Right ventricle myocardium superior (tissue), 1 donor: ENCODE measurements at regions of chr17 and their contacts with region 1.

Region 1: GRCh38 chr17:44919885-44920564 is 4.7 kb upstream of the GFAP start:
- DNase-seq: peak; percentile 88
- ATAC-seq: peak; percentile 82

Region 2: DNA sequence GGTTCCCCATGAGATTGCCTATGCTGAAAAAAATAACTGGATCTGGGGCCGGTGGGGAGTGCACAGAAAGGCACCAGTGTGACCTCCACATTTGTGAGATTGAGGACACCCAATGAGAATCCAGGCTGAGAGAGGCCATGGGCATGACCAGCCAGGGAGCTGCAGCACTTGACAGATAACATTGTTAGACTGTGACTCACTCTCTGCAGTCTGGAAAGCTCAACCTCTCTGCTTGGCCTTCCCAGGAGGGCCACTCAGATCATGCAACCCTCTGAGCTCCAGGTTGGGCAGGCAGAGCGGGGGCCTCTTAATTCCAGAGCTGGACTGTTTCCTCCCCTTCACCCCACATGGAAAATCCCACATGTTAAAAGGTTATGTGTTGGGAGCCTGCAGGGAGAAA is 332.7 kb before region 1 on chr17:
- intact Hi-C with region 1: no loop called
- DNase-seq: peak; percentile 48
- ATAC-seq: peak; percentile 97

Region 3: DNA sequence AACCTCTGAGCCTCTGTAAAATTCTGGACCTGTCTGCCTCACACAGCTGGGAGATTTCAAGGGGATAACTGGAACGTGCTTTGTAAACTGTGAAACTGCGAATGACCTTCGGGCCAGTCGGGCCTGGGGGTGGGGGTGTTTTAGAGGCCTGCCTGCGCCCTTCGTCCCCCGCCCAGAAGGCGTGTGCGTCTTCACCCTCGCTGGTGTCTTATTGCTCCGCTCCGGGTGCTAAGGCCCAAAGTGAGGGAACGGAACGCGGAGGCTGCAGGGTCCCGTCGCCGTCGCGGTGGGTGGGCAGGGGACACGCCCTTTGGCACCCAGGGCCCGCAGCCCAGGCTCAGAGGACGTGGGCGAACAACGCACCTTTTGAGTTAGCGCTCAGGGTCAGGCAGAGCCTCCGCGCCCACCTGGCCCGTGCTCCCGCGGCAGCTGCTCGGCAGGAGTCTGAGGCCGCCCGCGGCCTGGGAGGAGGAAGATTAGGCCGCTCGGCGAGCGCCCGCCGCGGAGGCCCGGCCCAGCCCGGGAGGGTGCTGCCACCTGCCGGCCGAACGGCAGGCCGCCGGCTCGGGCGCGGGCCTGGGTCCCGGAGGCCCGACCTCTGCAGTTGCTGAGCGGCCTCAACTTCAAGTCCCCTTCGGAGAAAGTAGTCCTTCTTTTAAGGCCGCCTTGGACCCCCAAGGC is 101.7 kb after region 1 on chr17:
- intact Hi-C with region 1: loop called (anchors 2 kb)
- DNase-seq: peak; percentile 84
- ATAC-seq: peak; percentile 83

Region 4: DNA sequence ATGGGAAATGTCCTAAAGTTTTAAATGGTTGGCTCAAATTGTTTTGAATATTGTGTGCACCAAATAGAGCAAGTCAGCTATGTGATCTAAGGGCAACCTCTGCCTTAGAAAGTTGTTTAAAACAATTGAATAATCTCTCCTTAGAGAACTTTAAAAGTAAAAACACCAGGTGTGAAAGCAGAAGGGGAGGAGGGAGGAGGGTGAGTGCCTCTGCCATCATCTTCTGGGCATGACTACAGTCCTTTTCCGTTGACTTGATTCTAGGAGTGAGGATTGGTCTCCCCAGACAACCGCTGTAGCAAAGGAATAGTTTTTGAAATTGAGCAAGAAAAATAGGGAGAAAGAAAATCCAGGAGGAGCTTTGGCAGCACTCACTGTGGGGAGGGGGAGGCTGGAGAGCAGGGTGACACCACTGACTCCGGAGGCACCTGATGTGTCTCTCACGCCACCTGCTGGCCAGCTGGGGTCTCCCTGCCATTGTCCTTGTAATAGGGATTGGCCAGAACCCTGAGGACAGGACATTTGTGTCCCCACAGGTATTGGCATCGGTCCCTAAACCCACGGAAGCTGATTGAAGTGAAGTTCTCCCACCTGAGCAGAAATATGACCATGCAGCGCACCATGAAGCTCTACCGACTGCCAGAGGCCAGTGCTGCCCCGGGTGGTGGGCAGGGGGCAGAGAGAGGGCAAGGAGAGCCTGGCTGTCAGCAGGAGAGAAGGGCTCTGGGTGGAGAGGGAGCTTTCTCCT is 179.0 kb after region 1 on chr17:
- intact Hi-C with region 1: loop called (anchors 10 kb)
- DNase-seq: peak; percentile 92
- ATAC-seq: peak; percentile 78

Region 5: DNA sequence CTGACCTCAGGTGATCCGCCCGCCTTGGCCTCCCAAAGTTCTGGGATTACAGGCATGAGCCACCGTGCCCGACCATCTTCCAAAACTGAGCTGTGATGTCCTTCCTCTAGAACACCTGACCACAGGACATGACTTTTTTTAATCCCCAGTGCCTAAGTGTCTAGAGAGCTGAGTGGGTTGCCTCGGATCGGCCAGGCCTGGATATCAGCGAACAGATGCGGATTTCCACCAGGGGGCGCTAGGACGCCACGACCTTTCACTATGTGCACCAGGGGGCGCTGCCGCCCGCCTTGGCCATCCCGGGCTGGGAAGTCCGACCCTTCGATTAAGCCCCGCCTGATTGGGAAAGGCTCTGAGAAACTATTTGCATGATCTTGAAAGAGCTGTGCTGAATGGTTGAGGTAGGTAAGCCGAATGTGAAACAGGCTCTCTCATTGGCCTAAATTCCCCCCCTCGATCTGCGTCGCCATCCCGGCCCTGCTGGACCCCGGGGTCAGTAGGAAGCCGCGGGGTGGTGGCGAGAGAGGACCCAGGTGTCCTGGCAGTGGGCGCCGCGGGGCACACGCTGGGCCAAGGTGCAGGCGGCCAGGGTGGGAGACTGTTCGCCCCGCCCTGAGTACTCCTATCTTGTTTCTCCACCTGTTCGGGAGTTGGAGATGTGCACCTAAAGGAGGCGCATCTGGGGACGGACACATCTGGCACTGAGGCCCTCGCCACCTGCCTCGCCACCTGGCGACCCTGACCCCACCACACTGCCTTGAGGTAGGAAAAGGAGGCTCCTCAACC is 215.4 kb after region 1 on chr17 and contains the start of gene ACBD4:
- intact Hi-C with region 1: loop called (anchors 5 kb)
- DNase-seq: peak; percentile 97
- ATAC-seq: peak; percentile 82
- total RNA-seq, gene ACBD4: 8.0 TPM

Region 6: GRCh38 chr17:45197555-45198334 is 277.7 kb after region 1 on chr17:
- intact Hi-C with region 1: loop called (anchors 10 kb)
- DNase-seq: peak; percentile 95
- ATAC-seq: peak; percentile 96